Activated naive CD4-positive, alpha-beta T cell treated with anti-CD3 and anti-CD28 coated beads, Interleukin-2, amount 10 ng/mL, durations not matched to agents 7 days and 5 days (primary cell): ENCODE measurements at regions of chr2 and their contacts with region 1.

Region 1: DNA sequence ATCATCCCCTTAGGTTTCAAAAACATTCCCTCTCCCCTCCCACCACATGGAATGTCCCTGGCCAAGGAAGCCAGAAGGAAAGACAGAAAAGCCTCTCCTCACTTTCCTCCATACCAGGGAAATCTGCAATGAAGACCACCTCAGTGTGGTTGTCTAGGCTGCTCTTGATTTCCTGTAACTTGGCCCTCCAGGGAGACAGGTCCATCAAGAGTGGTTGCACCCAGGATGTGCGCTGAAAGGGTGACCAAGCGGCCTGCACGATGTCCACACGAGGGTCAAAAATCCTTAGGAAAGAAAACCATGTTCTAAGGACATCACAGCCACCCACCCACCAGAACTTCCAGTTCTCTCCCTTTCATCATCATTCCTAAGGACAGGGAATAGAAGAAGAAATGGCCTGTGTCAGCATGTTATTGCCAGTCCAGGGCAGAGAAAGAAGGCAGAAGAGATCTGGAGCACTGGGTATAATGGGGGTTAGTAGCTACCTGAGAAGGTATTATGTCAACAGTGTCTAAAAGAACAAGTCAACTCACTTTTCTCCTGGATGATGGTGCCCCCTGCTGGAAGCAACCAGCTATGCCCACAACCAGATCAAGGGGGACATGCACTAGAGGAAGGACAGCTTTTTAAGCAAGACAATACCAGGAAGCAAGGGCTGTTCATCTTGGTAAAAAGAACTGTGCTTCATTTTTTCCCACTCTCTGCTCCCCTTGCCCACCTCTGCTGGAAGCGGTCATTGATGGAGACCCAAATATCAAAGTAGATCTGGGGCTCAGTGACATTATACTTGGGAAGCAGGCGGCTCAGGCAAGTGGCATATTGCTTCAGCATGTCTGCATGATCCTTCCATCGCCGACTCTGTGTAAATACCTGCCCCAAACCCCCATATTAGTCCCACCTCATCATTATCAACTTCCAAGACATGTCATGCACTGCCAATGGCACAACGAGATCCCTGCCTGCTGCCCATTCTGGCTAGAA is 9.3 kb downstream of the GGCX start:
- DNase-seq: peak; percentile 94
- H3K4me3 Mint-ChIP-seq: no peak overlapping the region
- H3K27ac Mint-ChIP-seq: peak overlapping the region; percentile 70
- H3K4me1 Mint-ChIP-seq: peaks cover 6% of the 10 kb centered on the region
- H3K27me3 Mint-ChIP-seq: no peaks in the 10 kb centered on the region

Region 2: GRCh38 chr2:85032621-85033020 is 519.4 kb before region 1 on chr2:
- CTCF ChIA-PET with region 1: no interaction called
- DNase-seq: no peak
- H3K4me3 Mint-ChIP-seq: no peak overlapping the region
- H3K27ac Mint-ChIP-seq: no peak overlapping the region
- H3K4me1 Mint-ChIP-seq: peaks cover 6% of the 10 kb centered on the region
- H3K27me3 Mint-ChIP-seq: no peaks in the 10 kb centered on the region

Region 3: DNA sequence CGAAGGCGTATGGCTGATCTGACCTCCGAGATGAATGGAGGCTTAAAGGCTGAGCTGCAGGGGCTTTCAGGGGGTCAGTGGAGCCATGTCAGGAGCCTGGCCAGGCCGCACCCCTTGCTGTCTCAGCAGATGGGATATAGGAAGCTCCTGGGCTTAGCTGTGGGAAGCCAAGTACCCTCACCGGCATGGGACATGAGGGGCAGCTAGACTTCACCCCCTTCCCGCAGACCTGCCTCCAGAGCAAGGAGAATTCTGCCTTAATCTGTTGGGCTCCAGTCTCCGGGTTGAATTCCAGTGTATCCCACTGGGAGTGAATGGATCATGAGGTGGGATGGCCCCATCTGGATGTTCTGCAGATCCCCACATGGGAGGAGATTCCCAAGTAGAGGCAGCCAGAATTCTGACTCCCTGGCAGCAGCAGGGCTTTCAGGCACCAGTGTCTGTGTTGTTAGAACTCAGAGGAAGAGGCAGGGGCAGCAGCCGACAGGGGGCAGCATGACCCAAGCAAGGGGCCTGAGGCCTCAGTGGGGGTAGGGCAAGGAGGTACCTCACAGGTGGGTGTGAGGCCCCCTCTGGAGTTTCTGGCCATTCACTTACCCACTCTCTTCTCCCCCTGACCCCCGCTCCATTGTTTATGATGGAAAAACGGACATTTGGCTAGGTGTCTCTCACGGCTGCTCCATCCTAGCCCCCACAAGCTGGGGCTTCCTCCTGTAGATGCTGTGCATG is 160.9 kb before region 1 on chr2:
- CTCF ChIA-PET with region 1: interaction called, 118 read pairs
- DNase-seq: peak; percentile 86
- H3K4me3 Mint-ChIP-seq: no peak overlapping the region
- H3K27ac Mint-ChIP-seq: peak overlapping the region; percentile 68
- H3K4me1 Mint-ChIP-seq: peaks cover 28% of the 10 kb centered on the region
- H3K27me3 Mint-ChIP-seq: no peaks in the 10 kb centered on the region

Region 4: DNA sequence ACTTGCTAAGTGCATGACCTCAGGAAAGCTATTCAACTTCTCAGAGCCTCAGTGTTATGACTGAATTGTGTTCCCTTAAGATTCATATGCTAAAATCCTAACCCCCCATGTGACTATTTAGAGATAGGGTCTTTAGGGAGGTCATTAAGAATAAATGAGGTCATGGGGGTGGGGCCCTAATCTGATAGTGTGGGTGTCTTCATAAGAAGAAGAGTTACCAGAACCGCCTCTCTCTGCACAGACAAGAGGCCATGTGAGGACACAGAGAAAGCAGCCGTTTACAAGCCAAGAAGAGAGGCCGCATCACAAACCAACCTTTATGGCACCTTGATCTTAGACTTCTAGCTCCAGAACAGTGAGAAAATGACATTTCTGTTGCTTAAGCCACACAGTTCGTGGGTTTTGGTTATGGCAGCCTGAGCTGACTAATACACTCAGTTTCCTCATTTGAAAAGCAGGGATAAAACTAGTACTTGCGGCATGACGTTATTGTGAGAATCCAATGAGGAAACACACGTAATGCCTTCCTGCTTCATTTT is 123.6 kb before region 1 on chr2:
- CTCF ChIA-PET with region 1: interaction called, 15 read pairs
- DNase-seq: no peak
- H3K4me3 Mint-ChIP-seq: no peak overlapping the region
- H3K27ac Mint-ChIP-seq: no peak overlapping the region
- H3K4me1 Mint-ChIP-seq: no peaks in the 10 kb centered on the region
- H3K27me3 Mint-ChIP-seq: peaks cover 17% of the 10 kb centered on the region

Region 5: DNA sequence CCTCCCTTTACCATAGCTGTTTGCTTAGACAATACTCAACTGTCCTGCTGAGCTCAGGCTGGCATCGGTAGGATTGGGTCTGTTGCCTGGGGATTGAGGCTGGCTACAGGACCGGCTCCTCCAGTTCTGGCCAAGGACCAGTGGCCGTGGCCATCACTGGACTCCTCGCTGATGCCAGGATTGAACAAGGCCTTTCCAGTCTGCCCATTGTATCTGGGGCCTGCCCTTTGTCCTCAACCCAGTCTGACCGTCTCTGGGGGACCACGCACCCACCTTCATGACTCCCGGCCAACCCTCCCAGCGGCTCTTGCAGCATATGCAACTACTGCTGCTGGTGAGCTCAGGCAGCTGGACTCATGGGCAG is 104.8 kb before region 1 on chr2:
- CTCF ChIA-PET with region 1: no interaction called
- DNase-seq: no peak
- H3K4me3 Mint-ChIP-seq: no peak overlapping the region
- H3K27ac Mint-ChIP-seq: no peak overlapping the region
- H3K4me1 Mint-ChIP-seq: peaks cover 14% of the 10 kb centered on the region
- H3K27me3 Mint-ChIP-seq: peaks cover 22% of the 10 kb centered on the region

Region 6: GRCh38 chr2:85538486-85539360 is 13.3 kb before region 1 on chr2 and contains the start of gene MAT2A:
- CTCF ChIA-PET with region 1: interaction called, 34 read pairs
- DNase-seq: peak; percentile 87
- H3K4me3 Mint-ChIP-seq: peak within 1 kb of the TSS; percentile 92
- H3K27ac Mint-ChIP-seq: peak within 1 kb of the TSS; percentile 90
- H3K4me1 Mint-ChIP-seq: peaks cover 48% of the 10 kb centered on the region
- H3K27me3 Mint-ChIP-seq: no peaks in the 10 kb centered on the region